Motor neuron (in vitro differentiated cells): ENCODE measurements at regions of chr10 and their contacts with region 1.

Region 1: DNA sequence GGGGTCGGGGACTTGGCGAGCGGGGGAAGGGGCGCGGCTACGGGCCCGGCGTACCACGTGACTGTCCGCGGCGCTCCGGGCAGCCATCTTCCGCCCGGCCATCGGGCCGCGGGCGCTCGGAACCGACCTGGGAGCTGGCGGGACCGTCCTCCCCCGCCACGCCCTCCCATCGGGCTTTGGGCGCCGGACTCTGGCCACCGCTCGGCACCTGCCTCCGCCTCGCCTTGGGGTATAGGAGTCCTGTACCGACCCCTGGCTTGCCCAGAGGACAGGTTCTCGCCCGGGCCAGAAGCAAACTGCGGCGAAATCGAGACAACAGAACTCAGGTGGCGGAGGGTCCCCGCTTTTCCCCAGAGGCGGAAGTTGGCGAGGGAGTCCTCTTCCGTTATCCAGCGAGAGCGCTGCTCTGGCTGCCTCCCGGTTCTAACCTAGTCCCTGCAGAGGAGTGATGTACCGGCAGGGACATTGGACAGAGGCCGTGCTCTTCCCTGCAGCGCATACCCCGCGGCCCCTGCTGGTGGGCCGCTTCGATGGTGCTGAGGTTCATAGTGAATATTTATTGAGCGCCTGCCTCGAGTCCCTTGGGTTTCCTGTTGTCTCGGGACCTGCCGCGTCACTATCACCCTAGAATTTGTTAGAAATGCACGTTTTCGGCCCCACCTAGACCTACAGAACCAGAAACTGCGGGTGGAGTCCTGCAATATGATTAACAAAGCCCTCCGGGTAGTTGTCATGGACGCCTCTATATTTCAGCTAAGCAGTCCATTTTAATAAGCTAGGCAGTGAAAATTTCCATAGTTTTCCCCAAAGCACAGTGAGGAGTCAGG is 1.3 kb upstream of the SGMS1 start:
- ATAC-seq: peak; percentile 38 to 66 (median 56)
- H3K4me3 ChIP-seq: peak overlapping the region; percentile 81 to 99 (median 94)
- H3K27ac ChIP-seq: peak overlapping the region; percentile 98 to 99
- H3K4me1 ChIP-seq: peaks cover 4 to 11% of the 10 kb centered on the region in 2 donors

Region 2: DNA sequence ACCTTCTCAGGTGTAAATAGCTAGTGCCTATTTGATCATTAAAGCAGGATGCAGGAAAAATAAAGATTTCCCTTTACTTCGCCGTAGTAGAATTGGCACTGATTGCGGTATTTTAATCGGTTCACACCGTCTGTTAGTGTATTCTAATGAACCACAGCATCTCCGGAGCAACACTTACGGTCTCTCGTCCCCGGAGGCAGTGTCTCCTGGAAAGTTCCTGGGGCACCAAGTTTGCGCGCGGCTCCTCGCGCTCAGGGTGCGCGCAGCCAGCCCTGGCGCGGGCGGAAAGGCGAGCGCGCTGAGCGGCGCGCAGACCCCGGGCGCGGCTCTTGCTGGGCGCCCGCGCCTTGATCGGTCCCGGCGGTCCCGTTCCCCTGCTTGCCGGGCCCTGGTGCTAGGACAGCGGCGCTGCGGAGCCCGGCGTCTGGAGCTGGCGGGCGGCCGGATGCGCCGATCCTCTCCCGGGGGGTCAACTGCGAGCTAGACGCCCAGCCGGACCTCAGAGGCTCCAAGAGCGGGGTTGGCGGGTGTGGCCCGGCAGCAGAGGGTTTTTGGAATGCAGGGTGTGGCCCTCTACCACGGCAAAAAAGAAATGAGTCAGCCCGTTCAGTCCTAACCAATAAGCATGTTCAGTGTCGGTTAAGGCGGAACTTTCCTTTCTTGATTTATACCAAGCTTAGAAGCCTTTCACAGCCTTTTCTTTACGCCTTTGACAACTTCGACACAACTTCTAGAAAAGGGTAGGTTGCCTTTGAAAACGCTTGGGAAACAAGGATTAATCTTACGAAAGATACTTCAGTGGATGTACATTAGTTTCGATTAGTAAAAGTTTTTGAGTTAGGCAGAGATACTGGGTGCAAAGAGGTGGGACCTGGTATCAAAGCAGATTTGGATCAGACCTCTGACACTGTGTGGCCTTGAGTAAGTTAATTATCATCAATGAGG is 206.9 kb before region 1 on chr10:
- in situ Hi-C with region 1: loop called in 2 of 9 experiments (anchors 25 kb)
- ATAC-seq: peak; percentile 65 to 96 (median 84)
- H3K4me3 ChIP-seq: peak overlapping the region; percentile 26 to 46 (median 31)
- H3K27ac ChIP-seq: no peak overlapping the region
- H3K4me1 ChIP-seq: no peaks in the 10 kb centered on the region

Region 3: DNA sequence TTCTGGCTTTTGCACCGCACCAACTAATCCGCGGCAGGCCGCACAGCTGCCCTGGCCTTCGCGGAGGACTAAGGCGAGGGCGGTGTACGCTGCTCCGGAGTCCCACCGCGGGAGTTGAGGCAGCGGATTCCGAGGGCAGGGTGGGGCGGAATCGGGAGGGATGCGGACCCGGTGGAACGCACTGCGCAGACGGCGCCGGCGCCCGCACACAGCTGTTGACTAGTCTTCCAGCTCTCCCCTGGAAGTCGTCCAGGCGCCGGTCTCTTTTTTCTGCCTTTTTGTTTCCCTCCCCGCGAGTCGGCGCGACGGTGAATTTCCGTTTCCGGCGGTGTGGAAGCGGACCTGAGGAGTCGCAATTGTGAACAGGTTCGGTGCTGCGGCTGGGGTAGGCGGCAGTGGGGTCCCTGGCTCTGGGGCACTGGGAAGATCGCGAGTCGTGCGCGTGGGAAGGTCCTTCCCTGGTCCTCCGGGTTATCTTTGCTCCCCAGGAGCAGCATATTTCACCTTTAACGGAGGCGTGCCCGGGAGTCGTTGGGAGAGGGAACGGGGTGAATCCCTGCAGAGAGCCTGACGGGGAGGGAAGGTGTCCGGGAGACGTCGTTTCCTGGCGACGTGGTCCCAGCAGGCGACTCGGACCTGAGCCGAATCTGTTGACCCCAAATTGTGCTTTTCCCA is 114.7 kb after region 1 on chr10 and contains the start of gene ASAH2B:
- in situ Hi-C with region 1: loop called in 1 of 9 experiments (anchors 25 kb)
- ATAC-seq: peak; percentile 83 to 92 (median 90)
- H3K4me3 ChIP-seq: peak within 1 kb of the TSS; percentile 67 to 88 (median 83)
- H3K27ac ChIP-seq: peak within 1 kb of the TSS; percentile 88 to 90
- H3K4me1 ChIP-seq: peaks cover 5 to 10% of the 10 kb centered on the region in 2 donors
- total RNA-seq, gene ASAH2B: 8.4 to 11.4 (median 10.0) TPM